ENCODE measurements at regions of chr2 and their contacts with region 1.

Region 1: DNA sequence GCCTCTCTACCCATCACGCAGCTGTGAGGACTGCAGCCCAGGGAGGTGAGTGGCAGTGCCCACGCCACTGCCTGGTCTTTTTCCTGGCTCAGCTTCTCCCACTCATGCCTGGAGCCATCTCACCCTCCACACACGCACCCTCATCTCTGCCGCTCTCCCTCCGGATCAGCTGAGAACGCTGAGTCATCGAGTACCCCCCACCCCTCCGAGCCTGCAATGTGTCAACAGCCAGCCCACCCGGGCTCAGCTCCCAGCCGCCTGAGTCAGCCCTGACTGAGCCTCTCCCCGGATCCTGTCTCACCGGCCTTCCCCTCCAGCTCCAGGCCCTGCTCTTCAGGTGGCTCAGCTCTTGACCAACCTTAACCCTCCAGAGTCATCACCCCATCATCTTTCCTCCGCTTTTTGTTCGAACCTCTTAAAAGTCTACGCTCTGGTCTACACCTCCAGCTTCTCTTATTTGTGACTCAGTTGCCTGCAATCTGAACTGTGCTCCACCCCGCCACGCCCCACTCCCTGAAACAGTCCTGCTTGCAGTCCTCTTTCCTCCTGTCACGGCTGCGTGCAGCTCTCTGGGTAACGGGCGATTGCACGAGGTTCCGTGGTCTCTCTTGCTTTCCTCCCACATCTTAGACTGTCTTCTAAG is 94.4 kb upstream of the ASAP2 start:
- DNase-seq: peak; percentile 97
- ATAC-seq: peak; percentile 94
- H3K4me3 ChIP-seq: peak overlapping the region; percentile 14; the same call in 1 of the 2 replicates
- H3K27ac ChIP-seq: peak overlapping the region; percentile 94
- H3K4me1 ChIP-seq: peaks cover 48% of the 10 kb centered on the region
- H3K27me3 ChIP-seq: no peaks in the 10 kb centered on the region
- CTCF ChIP-seq: no peak

Region 2: DNA sequence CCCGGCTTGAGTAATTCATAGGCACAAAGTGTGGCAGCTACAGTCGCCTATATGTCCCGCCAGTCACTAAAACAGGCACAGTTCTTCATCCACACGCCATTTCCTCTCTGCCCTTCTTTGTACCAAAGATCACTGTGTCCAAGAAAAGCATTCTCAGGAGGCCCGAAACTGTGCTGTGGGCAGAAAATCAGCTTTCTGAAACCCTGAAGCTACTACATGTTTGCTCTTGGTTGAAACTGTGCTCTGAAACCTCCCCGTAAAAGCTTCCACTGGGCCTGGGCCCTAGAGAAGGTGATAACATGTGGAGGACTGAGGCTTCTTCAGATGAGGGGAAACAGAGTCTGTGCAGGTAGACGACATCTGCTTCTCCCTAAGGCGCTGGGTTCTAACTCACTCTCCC is 506.0 kb before region 1 on chr2:
- CTCF ChIA-PET with region 1: no interaction called
- POLR2A ChIA-PET with region 1: no interaction called
- intact Hi-C with region 1: no loop called
- DNase-seq: no peak
- ATAC-seq: no peak
- H3K4me3 ChIP-seq: no peak overlapping the region
- H3K27ac ChIP-seq: peak overlapping the region; percentile 47
- H3K4me1 ChIP-seq: peaks cover 52% of the 10 kb centered on the region
- H3K27me3 ChIP-seq: no peaks in the 10 kb centered on the region
- CTCF ChIP-seq: no peak

Region 3: DNA sequence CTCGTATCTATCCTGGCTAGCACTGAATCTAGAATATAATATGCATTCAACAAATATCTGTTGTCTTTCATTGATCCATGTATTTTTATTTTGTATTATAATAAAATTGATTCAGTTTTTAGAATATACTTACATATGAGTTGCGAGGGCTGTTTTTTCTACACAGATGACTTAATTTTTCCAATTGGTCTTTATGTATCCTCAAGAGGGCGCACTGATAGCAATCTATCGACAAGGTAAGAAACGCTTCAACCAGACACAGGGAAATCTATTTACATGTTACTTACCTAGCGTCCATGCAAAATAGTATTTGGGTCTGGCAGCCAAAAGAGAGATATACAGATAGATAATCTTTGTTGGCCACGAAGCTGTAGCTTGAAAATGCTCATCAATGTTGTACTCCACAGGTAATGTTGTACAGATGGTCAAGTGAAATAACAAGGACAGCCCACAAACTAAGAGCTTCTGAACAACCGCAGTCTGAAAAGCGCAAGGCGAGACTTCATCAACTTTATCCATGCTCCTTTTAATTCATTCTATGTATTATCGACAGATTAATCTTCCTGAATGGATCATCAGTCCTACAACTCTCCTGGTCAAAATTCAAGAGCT is 239.3 kb before region 1 on chr2:
- CTCF ChIA-PET with region 1: no interaction called
- POLR2A ChIA-PET with region 1: no interaction called
- intact Hi-C with region 1: loop called (anchors 1 kb)
- DNase-seq: peak; percentile 70
- ATAC-seq: 0 out of 2 replicates have a peak, but pooled peaks have one; percentile 40
- H3K4me3 ChIP-seq: no peak overlapping the region
- H3K27ac ChIP-seq: no peak overlapping the region
- H3K4me1 ChIP-seq: 0 out of 2 replicates have a peak, but pooled peaks cover 4% of the 10 kb centered on the region
- H3K27me3 ChIP-seq: no peaks in the 10 kb centered on the region
- CTCF ChIP-seq: peak; percentile 77

Region 4: GRCh38 chr2:9018534-9018933 is 93.7 kb before region 1 on chr2:
- CTCF ChIA-PET with region 1: no interaction called
- POLR2A ChIA-PET with region 1: no interaction called
- intact Hi-C with region 1: no loop called
- DNase-seq: no peak
- ATAC-seq: no peak
- H3K4me3 ChIP-seq: no peak overlapping the region
- H3K27ac ChIP-seq: no peak overlapping the region
- H3K4me1 ChIP-seq: peaks cover 9% of the 10 kb centered on the region
- H3K27me3 ChIP-seq: no peaks in the 10 kb centered on the region
- CTCF ChIP-seq: no peak

Region 5: DNA sequence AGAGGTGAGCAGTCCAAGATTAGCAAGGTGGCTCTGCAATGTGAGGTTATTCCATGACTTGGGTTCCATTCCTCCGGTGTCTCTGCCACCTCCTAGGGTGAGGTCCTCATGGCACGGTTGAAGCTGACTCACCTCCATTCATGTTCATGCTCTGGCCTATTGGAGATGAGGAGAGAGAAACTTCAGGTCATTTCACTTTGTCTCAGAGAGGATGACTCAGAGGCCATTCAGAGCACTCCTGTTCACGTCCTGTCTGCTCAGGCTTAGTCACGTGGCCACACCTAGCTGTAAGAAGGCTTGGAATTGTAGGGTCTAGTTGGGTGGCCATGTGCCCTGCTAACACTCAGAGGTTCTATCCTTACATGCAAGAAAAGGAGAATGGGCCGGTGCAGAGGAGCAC is 41.2 kb before region 1 on chr2:
- CTCF ChIA-PET with region 1: no interaction called
- POLR2A ChIA-PET with region 1: no interaction called
- intact Hi-C with region 1: loop called (anchors 1 kb)
- DNase-seq: peak; percentile 99
- ATAC-seq: peak; percentile 94
- H3K4me3 ChIP-seq: no peak overlapping the region
- H3K27ac ChIP-seq: peak overlapping the region; percentile 92
- H3K4me1 ChIP-seq: peaks cover 32% of the 10 kb centered on the region
- H3K27me3 ChIP-seq: no peaks in the 10 kb centered on the region
- CTCF ChIP-seq: no peak

Region 6: GRCh38 chr2:9135780-9136558 is 23.8 kb after region 1 on chr2:
- CTCF ChIA-PET with region 1: interaction called, 3 read pairs
- POLR2A ChIA-PET with region 1: interaction called, 4 read pairs
- intact Hi-C with region 1: loop called (anchors 2 kb)
- DNase-seq: no peak
- ATAC-seq: no peak
- H3K4me3 ChIP-seq: no peak overlapping the region
- H3K27ac ChIP-seq: no peak overlapping the region
- H3K4me1 ChIP-seq: no peaks in the 10 kb centered on the region; the same call in 1 of the 2 replicates
- H3K27me3 ChIP-seq: no peaks in the 10 kb centered on the region
- CTCF ChIP-seq: no peak

Region 7: DNA sequence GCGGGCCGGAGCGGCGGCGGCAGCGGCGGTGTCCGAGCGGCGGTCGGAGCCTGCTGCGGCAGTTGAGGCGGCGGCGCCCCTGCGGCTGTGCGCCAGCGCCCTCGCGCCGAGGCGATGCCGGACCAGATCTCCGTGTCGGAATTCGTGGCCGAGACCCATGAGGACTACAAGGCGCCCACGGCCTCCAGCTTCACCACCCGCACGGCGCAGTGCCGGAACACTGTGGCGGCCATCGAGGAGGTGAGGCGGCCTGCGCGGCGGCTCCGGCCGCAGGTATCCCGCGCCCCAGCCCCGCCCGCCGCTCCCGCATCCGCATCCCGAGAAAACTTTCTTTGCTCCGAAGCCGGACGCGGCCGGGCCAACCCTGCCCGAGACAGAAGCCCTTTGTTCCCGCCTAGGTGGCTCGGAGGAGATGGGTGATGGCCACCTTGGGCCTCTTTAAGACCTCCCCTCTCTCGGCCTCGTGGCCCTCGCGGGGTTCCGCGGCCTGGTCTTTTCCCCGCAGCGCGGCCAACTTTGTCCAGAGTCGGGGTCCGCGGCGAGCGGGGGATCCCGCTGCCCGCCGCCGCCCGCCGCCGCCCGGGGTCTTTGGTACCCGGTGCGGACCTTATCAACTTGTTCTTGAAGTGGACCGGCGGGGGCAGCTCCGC is 94.9 kb after region 1 on chr2:
- CTCF ChIA-PET with region 1: no interaction called
- POLR2A ChIA-PET with region 1: interaction called, 21 read pairs
- intact Hi-C with region 1: no loop called
- DNase-seq: no peak
- ATAC-seq: peak; percentile 9
- H3K4me3 ChIP-seq: peak overlapping the region; percentile 89
- H3K27ac ChIP-seq: peak overlapping the region; percentile 80
- H3K4me1 ChIP-seq: peaks cover 34% of the 10 kb centered on the region
- H3K27me3 ChIP-seq: no peaks in the 10 kb centered on the region
- CTCF ChIP-seq: no peak

Region 8: GRCh38 chr2:9993488-9994165 is 881.4 kb after region 1 on chr2:
- CTCF ChIA-PET with region 1: no interaction called
- POLR2A ChIA-PET with region 1: no interaction called
- intact Hi-C with region 1: no loop called
- DNase-seq: no peak
- ATAC-seq: no peak
- H3K4me3 ChIP-seq: no peak overlapping the region
- H3K27ac ChIP-seq: no peak overlapping the region
- H3K4me1 ChIP-seq: peaks cover 24% of the 10 kb centered on the region
- H3K27me3 ChIP-seq: no peaks in the 10 kb centered on the region
- CTCF ChIP-seq: no peak

Measured in PC-3 (cell line).